ENCODE measurements at regions of chr5 and their contacts with region 1.

Region 1: GRCh38 chr5:8993031-8993430 is 552.8 kb downstream of the SEMA5A start:
- DNase-seq: peak; percentile 65
- ATAC-seq: peak; percentile 70
- H3K4me3 ChIP-seq: no peak overlapping the region
- H3K27ac ChIP-seq: no peak overlapping the region
- H3K4me1 ChIP-seq: peaks cover 4% of the 10 kb centered on the region; the same call in 1 of the 2 replicates
- H3K27me3 ChIP-seq: no peaks in the 10 kb centered on the region
- CTCF ChIP-seq: peak; percentile 89

Region 2: DNA sequence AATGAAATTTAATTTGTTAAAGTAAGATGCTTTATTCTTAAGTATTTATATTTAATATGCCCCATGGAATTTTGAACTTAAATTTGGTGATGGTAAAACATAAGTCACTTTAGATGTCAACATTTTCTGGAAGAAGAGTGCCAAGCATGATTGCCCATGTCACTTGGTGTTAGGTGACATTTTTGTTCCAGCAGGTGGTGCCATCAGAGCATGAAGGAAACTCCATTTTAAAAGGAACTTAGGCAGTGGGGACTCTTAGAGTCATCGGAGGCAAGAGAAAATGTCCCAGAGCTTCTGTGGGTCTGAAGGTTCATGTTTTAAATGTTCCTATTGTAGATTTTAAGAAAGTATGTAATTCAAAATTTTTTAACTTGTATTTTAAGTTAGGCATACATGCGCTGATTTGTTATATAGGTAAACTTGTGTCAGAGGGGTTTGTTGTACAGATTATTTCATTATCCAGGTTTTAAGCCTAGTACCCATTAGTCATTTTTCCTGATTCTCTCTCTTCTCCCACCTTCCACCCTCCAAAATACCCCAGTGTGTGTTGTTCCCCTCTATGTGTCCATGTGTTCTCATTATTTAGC is 236.4 kb before region 1 on chr5:
- CTCF ChIA-PET with region 1: no interaction called
- POLR2A ChIA-PET with region 1: no interaction called
- intact Hi-C with region 1: loop called (anchors 5 kb)
- DNase-seq: peak; percentile 87
- ATAC-seq: peak; percentile 85
- H3K4me3 ChIP-seq: no peak overlapping the region
- H3K27ac ChIP-seq: no peak overlapping the region
- H3K4me1 ChIP-seq: no peaks in the 10 kb centered on the region
- H3K27me3 ChIP-seq: no peaks in the 10 kb centered on the region
- CTCF ChIP-seq: peak; percentile 96

Region 3: GRCh38 chr5:8864053-8864452 is 129.0 kb before region 1 on chr5:
- CTCF ChIA-PET with region 1: no interaction called
- POLR2A ChIA-PET with region 1: no interaction called
- intact Hi-C with region 1: loop called (anchors 5 kb)
- DNase-seq: peak; percentile 85
- ATAC-seq: peak; percentile 78
- H3K4me3 ChIP-seq: no peak overlapping the region
- H3K27ac ChIP-seq: no peak overlapping the region
- H3K4me1 ChIP-seq: no peaks in the 10 kb centered on the region
- H3K27me3 ChIP-seq: no peaks in the 10 kb centered on the region
- CTCF ChIP-seq: peak; percentile 97

Region 4: DNA sequence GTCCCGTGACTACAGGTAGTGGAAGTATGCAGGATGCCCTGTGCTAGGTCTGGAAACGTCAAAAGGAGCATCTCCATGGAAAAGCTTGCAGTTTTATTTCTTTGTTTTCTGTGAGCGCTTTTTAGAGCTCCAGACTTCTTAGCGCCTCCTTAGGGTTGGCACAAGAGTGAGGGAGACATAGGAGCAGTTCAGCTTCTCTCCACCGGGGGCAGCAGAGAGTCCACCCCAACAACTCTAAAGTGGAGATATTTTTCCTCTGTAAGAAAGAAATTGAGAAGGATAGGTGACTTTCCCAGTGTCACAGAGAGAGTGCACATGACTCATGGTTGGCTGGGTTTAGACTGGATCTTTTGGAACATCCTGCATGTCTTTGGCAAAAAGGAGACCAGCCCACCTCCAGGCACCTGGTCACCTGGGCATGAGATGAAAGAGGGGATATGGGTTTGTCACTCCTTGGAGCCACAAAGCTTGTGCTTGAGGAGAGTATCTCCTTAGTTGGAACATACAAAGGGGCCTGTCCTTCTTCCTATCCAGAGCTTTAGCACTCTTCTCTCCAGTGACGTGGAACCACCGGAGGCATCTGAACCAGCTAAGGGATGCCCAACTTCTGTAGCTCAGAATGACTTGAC is 84.9 kb before region 1 on chr5:
- CTCF ChIA-PET with region 1: no interaction called
- POLR2A ChIA-PET with region 1: no interaction called
- intact Hi-C with region 1: loop called (anchors 10 kb)
- DNase-seq: peak; percentile 83
- ATAC-seq: no peak
- H3K4me3 ChIP-seq: peak overlapping the region; percentile 42; the same call in 1 of the 2 replicates
- H3K27ac ChIP-seq: peak overlapping the region; percentile 95
- H3K4me1 ChIP-seq: peaks cover 52% of the 10 kb centered on the region
- H3K27me3 ChIP-seq: no peaks in the 10 kb centered on the region
- CTCF ChIP-seq: peak; percentile 99; the same call in 1 of the 2 replicates

Measured in PC-3 (cell line).